ENCODE measurements at regions of chr6 and their contacts with region 1.

Region 1: DNA sequence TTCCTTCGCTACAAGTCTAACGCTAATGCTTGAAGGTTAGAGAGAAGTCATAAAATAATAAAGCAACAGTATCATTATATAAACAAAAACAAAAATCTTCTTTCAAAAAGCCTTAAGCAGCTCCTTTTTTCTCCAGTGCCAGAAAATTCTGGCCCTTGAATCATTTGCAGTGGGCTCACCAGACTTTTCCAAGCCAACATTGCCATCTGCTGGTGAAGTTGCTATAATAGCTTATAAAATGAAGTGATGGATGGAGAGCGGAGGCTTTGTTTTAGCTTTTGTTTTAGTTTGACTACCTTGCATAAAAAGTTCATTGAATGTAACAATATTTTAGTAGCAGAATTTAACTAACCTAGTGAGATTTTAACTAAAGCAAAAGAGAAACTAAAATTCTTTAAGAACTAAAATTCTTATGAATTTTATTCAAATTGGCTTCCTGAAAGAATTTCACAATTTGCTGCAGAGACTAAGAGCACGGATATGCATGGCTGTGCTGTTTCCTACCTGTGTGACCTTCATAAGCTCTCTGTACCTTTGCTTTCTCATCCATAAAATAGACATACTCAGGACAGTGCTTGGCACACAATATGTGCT is 44.8 kb upstream of the SLC2A12 start:
- DNase-seq: peak; percentile 13 to 64
- ATAC-seq: peak in 2 of 8 donors; percentile 49 to 53
- H3K4me3 ChIP-seq: no peak overlapping the region
- H3K27ac ChIP-seq: no peak overlapping the region
- H3K4me1 ChIP-seq: no peaks in the 10 kb centered on the region
- H3K27me3 ChIP-seq: peaks cover 0 to 11% (median 0%) of the 10 kb centered on the region in 7 donors
- CTCF ChIP-seq: peak; percentile 28 to 82 (median 71)

Region 2: DNA sequence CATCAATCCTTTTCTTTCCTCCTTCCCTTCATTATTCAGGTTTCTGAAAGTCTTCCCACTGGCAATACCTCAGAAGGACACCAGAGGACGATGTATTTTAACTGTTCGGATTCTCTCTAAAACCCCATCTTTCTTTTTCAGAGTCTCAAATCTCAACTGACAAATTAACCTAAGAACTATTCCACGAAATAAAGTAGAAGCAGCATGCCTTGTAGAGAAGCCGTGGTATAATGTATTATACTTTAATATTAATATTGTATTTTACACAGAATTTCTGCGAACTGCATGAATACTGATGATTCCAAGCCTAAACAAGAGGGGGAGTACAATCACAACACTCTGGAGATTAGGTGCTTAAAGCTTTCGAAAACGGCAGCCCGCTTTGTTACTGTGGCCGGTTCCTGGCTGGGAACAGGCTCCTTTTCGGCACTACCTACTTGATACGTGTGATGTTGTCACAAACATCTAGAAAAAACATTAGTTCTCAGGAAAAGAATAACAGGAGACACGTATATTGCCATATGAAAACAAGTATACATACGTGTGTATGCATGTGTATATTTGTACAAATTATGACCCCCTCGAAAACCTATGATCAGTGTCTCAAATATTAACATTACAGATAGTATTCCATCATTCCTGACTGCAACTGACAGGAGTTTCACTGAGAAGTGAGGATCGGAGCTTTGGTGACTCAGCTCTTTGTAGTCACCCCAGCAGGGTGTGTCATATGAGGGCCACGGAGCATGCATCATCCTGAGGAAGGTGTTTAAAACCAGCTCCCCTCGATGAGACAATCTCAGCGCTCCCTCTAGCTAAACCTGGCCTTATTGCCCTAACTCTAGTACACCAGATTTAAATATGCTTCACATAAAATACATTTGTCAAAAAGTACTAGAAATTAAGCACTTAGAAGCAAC is 528.0 kb before region 1 on chr6:
- intact Hi-C with region 1: loop called in 6 of 10 experiments (anchors 5 to 10 kb)
- DNase-seq: peak in 1 of 2 donors; percentile 16
- ATAC-seq: peak; percentile 68 to 90 (median 80)
- H3K4me3 ChIP-seq: peak overlapping the region; percentile 5 to 56 (median 44)
- H3K27ac ChIP-seq: peak overlapping the region in 5 of 10 donors; percentile 10 to 45 (median 29)
- H3K4me1 ChIP-seq: peaks cover 0 to 7% (median 0%) of the 10 kb centered on the region in 9 donors
- H3K27me3 ChIP-seq: peaks cover 0 to 12% (median 0%) of the 10 kb centered on the region in 7 donors
- CTCF ChIP-seq: peak; percentile 57 to 92 (median 81)

Region 3: DNA sequence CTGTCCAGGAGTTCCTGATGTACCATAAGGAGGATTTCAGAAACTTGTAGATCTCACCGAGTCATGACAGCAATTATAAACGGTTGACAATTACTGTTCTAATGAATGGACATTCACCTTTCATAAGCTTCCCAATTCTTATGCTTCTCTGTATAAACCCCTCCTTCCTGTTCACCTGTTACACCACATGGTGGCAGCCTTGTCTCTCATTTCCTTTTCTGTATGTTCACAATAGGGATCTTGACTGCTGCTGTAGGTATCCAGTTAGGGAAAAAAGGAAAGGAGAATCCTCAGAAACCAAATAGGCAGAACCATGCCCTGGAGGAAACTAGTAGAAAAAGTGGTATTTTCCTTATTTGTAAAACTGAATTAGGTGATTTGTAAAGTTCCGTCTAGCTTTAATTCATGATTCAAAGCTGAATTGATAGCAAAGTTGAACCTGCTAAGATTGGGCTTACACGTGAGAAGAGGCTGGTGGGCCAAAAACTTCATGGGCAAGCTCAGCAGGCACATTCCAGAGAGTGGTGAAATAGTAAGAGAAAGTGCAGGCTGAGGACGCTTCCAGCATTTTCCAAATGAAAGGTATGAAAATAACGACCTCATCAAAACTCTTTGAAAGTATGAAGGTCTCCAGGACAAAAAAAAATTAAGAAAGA is 173.1 kb before region 1 on chr6:
- intact Hi-C with region 1: loop called (anchors 1 to 5 kb)
- DNase-seq: peak in 1 of 2 donors; percentile 75
- ATAC-seq: peak; percentile 79 to 93 (median 91)
- H3K4me3 ChIP-seq: no peak overlapping the region
- H3K27ac ChIP-seq: no peak overlapping the region
- H3K4me1 ChIP-seq: no peaks in the 10 kb centered on the region
- H3K27me3 ChIP-seq: peaks cover 0 to 22% (median 3%) of the 10 kb centered on the region in 7 donors
- CTCF ChIP-seq: peak; percentile 69 to 93 (median 87)

Region 4: DNA sequence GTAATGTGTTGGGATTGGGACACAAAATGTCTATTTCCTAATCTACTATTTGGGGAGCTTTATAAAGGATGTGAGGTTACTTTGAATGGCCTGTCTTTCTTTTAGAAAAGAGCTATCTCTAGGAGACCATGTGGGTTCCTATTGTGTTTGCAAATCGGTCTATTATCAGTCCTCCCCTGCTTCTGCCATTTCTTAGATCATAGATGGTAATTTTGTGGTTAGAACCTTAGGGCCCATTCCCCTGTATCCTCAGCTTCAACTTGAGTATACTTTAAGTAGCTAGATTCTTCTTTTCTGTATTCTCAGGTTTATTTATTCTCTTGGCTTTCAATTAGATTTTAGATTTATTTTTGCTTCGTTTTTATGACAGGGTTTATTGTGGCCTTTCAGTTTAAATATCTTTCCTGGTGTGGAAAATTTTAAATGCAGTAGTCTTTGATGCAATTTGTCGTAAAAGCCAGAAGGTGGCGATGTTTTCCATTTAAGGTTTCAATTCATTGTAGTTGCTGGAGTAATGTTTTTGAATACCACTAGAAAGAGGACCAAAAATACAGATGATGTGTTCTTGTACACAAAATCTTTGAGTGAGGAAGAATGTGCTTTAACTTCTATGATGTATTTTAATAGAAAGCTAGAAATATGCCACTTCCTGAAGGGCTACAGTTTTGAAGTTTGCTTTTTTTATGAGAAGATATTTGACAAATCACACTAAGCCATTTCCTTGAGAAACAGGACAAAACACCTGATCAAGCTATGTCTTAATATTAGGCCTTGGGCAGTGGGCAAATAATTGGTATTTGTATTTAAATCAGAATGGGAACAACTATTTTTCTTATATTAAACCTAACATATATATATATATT is 123.9 kb before region 1 on chr6:
- intact Hi-C with region 1: loop called in 2 of 10 experiments (anchors 5 to 10 kb)
- DNase-seq: no peak
- ATAC-seq: peak in 1 of 8 donors; percentile 58
- H3K4me3 ChIP-seq: no peak overlapping the region
- H3K27ac ChIP-seq: no peak overlapping the region
- H3K4me1 ChIP-seq: peaks cover 0 to 40% (median 25%) of the 10 kb centered on the region in 9 donors
- H3K27me3 ChIP-seq: no peaks in the 10 kb centered on the region
- CTCF ChIP-seq: peak; percentile 52 to 83 (median 77)

Region 5: DNA sequence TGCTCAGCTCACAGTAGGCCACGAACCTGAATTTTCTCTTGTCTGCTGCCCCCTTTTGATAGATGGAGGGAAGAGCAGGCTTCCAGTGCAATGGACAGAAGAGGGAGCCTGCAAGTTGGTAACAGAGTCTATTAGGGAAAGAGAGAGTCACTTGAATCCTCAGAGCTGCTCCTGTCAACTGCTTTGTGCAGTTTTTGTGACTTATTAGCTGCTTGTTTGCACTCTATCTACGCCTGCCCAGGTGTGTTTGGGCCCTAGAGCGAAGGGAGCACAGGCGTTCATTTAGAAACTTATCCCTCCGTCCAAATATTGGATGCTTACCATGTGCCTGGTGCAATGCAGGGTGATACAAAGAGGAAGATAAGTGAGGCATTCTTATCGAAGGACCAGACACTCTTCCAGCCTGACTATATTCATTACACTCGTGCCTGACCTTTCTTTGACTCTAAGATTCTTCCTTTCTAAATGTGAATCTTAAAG is 33.2 kb before region 1 on chr6:
- intact Hi-C with region 1: no loop called
- DNase-seq: peak in 1 of 2 donors; percentile 68
- ATAC-seq: peak; percentile 76 to 92 (median 87)
- H3K4me3 ChIP-seq: no peak overlapping the region
- H3K27ac ChIP-seq: no peak overlapping the region
- H3K4me1 ChIP-seq: peaks cover 0 to 20% (median 10%) of the 10 kb centered on the region in 9 donors
- H3K27me3 ChIP-seq: no peaks in the 10 kb centered on the region
- CTCF ChIP-seq: peak; percentile 54 to 85 (median 77)